Naive thymus-derived CD4-positive, alpha-beta T cell (primary cell): ENCODE measurements at regions of chr17 and their contacts with region 1.

Region 1: GRCh38 chr17:28951991-28952975 is 965 bp upstream of the PHF12 start:
- DNase-seq: peak; percentile 79 to 99 (median 96)
- ATAC-seq: peak; percentile 82
- H3K4me3 ChIP-seq: peak overlapping the region; percentile 84
- H3K4me3 Mint-ChIP-seq: no peak overlapping the region
- H3K27ac ChIP-seq: peak overlapping the region; percentile 81
- H3K27ac Mint-ChIP-seq: no peak overlapping the region
- H3K4me1 ChIP-seq: peaks cover 19 to 26% of the 10 kb centered on the region in 2 donors
- H3K4me1 Mint-ChIP-seq: peaks cover 12 to 24% (median 14%) of the 10 kb centered on the region in 7 donors
- H3K27me3 ChIP-seq: no peaks in the 10 kb centered on the region
- H3K27me3 Mint-ChIP-seq: peaks cover 0 to 4% (median 0%) of the 10 kb centered on the region in 5 donors

Region 2: DNA sequence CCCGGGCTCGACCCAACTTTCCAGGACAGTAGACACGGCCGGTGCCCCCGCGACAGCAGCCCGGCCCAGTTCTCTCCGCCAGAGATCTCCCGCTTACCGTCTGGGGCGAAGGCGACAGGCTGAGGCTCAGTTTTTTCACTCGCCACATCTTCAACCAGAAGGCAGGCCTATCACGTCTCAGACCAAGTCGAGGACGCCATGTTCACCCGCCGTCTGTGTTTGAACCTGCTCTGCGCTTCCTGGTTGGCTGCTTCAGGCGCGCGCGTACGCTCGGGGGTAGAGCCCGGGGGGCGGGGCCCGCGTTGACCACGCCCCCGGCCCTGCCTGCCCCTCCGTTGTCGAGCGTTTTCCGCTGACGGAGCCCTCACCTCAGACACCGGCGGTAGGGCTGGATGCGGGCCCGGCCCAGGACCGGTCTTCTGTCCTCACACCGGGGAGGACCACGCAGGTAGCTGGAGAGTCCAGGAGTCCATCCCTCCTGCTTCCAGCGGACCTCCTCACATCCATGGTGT is 353.4 kb before region 1 on chr17 and contains the start of gene SPAG5:
- CTCF ChIA-PET with region 1: no interaction called
- POLR2A ChIA-PET with region 1: interaction called, 3 read pairs
- intact Hi-C with region 1: loop called in 1 of 2 experiments (anchors 2 kb)
- DNase-seq: peak; percentile 93 to 97 (median 96)
- ATAC-seq: peak; percentile 98
- H3K4me3 ChIP-seq: peak within 1 kb of the TSS; percentile 93
- H3K4me3 Mint-ChIP-seq: peak within 1 kb of the TSS; percentile 88 to 99 (median 94)
- H3K27ac ChIP-seq: peak within 1 kb of the TSS; percentile 97
- H3K27ac Mint-ChIP-seq: peak within 1 kb of the TSS; percentile 96 to 99 (median 98)
- H3K4me1 ChIP-seq: peaks cover 8 to 10% of the 10 kb centered on the region in 2 donors
- H3K4me1 Mint-ChIP-seq: peaks cover 18 to 25% (median 21%) of the 10 kb centered on the region in 7 donors
- H3K27me3 ChIP-seq: no peaks in the 10 kb centered on the region
- H3K27me3 Mint-ChIP-seq: no peaks in the 10 kb centered on the region
- total RNA-seq, gene SPAG5: 10.4 to 95.3 (median 18.4) TPM

Region 3: GRCh38 chr17:28726226-28727130 is 225.8 kb before region 1 on chr17 and contains the start of gene TLCD1:
- CTCF ChIA-PET with region 1: interaction called, 21 read pairs
- POLR2A ChIA-PET with region 1: interaction called, 96 read pairs
- intact Hi-C with region 1: loop called (anchors 1 kb)
- DNase-seq: peak; percentile 79 to 93 (median 87)
- ATAC-seq: peak; percentile 65
- H3K4me3 ChIP-seq: peak within 1 kb of the TSS; percentile 83
- H3K4me3 Mint-ChIP-seq: peak within 1 kb of the TSS; percentile 82 to 98 (median 96)
- H3K27ac ChIP-seq: peak within 1 kb of the TSS; percentile 100
- H3K27ac Mint-ChIP-seq: peak within 1 kb of the TSS; percentile 93 to 100 (median 98)
- H3K4me1 ChIP-seq: peaks cover 27 to 37% of the 10 kb centered on the region in 2 donors
- H3K4me1 Mint-ChIP-seq: peaks cover 12 to 63% (median 52%) of the 10 kb centered on the region in 7 donors
- H3K27me3 ChIP-seq: no peaks in the 10 kb centered on the region
- H3K27me3 Mint-ChIP-seq: no peaks in the 10 kb centered on the region
- total RNA-seq, gene TLCD1: 0.69 to 3.0 (median 0.79) TPM in 3 of 5 experiments, not detected in the others

Region 4: DNA sequence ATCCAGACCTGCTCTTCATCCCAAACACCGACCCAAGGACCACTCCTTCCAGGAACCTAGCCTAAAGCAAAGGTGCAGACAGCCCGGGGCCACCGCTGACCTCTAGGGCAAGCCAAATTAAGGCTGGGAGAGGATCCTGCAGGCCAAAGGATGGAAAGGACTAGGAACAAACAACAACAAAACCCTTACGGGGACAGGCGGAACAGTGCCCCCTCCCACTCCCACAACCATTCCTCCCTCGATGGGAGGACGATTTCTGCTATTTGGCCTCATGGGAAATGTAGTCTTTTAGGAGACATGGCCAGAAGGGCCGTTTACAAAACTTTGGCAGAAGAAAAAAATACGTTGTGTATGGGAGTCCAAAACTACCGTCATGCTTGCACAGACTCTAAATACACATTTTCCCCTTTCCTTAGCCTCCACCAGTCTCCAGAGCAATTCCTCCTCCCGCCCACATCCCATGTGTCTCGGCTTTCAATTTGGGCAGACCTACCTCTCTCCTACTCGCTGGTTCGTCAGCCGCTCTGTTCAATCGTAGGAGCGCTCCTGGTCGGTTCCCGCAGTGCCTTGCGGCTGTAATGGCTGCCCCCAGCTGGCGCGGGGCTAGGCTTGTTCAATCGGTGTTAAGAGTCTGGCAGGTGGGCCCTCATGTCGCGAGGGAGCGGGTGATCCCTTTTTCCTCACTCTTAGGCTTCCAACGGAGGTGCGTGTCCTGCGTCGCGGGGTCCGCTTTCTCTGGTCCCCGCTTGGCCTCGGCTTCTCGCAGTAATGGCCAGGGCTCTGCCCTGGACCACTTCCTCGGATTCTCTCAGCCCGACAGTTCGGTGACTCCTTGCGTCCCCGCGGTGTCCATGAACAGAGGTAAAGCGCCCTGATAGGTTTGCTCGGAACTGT is 97.6 kb before region 1 on chr17 and contains the start of gene ERAL1:
- CTCF ChIA-PET with region 1: no interaction called
- POLR2A ChIA-PET with region 1: interaction called, 4 read pairs
- intact Hi-C with region 1: loop called (anchors 1 kb)
- DNase-seq: peak; percentile 63 to 87 (median 83)
- ATAC-seq: peak; percentile 100
- H3K4me3 ChIP-seq: peak within 1 kb of the TSS; percentile 86
- H3K4me3 Mint-ChIP-seq: peak within 1 kb of the TSS; percentile 90 to 100 (median 94)
- H3K27ac ChIP-seq: peak within 1 kb of the TSS; percentile 82
- H3K27ac Mint-ChIP-seq: peak within 1 kb of the TSS; percentile 85 to 94 (median 90)
- H3K4me1 ChIP-seq: peaks cover 7 to 12% of the 10 kb centered on the region in 2 donors
- H3K4me1 Mint-ChIP-seq: peaks cover 0 to 27% (median 11%) of the 10 kb centered on the region in 7 donors
- H3K27me3 ChIP-seq: no peaks in the 10 kb centered on the region
- H3K27me3 Mint-ChIP-seq: no peaks in the 10 kb centered on the region
- total RNA-seq, gene ERAL1: 19.8 to 50.0 (median 24.9) TPM

Region 5: DNA sequence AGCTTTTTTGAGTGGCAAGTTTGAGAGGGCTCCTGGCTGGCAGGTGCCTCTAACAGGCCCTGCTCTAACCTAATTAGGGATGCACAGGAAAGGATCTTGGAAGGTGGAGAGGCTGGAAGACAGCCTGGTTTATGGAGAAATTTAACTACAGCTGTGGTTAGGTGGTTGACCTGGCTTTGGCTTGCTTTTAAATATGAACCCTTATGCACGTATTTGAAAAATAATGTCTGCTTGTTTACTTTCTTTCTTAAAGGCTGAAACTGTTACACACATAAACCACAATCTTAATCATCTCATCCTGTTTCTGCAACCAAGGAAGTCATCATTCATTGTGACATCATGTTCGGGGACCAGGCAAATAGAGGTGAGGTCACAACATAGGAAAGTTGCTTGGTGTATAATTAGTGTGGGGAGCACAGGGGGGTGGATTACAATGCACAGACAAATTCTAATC is 26.3 kb before region 1 on chr17:
- CTCF ChIA-PET with region 1: interaction called, 8 read pairs
- POLR2A ChIA-PET with region 1: interaction called, 93 read pairs
- intact Hi-C with region 1: loop called (anchors 1 kb)
- DNase-seq: peak in 7 of 9 donors; percentile 66 to 89 (median 82)
- ATAC-seq: peak; percentile 96
- H3K4me3 ChIP-seq: peak overlapping the region; percentile 31
- H3K4me3 Mint-ChIP-seq: peak overlapping the region; percentile 34 to 82 (median 60)
- H3K27ac ChIP-seq: peak overlapping the region; percentile 88
- H3K27ac Mint-ChIP-seq: peak overlapping the region; percentile 93 to 99 (median 96)
- H3K4me1 ChIP-seq: peaks cover 26 to 38% of the 10 kb centered on the region in 2 donors
- H3K4me1 Mint-ChIP-seq: peaks cover 35 to 65% (median 54%) of the 10 kb centered on the region in 7 donors
- H3K27me3 ChIP-seq: no peaks in the 10 kb centered on the region
- H3K27me3 Mint-ChIP-seq: no peaks in the 10 kb centered on the region

Region 6: GRCh38 chr17:28986714-28987655 is 34.7 kb after region 1 on chr17:
- CTCF ChIA-PET with region 1: no interaction called
- POLR2A ChIA-PET with region 1: no interaction called
- intact Hi-C with region 1: no loop called
- DNase-seq: no peak
- ATAC-seq: no peak
- H3K4me3 ChIP-seq: no peak overlapping the region
- H3K4me3 Mint-ChIP-seq: no peak overlapping the region
- H3K27ac ChIP-seq: no peak overlapping the region
- H3K27ac Mint-ChIP-seq: no peak overlapping the region
- H3K4me1 ChIP-seq: peaks cover 10 to 22% of the 10 kb centered on the region in 2 donors
- H3K4me1 Mint-ChIP-seq: peaks cover 16 to 25% (median 18%) of the 10 kb centered on the region in 7 donors
- H3K27me3 ChIP-seq: no peaks in the 10 kb centered on the region
- H3K27me3 Mint-ChIP-seq: peaks cover 0 to 4% (median 0%) of the 10 kb centered on the region in 5 donors

Region 7: DNA sequence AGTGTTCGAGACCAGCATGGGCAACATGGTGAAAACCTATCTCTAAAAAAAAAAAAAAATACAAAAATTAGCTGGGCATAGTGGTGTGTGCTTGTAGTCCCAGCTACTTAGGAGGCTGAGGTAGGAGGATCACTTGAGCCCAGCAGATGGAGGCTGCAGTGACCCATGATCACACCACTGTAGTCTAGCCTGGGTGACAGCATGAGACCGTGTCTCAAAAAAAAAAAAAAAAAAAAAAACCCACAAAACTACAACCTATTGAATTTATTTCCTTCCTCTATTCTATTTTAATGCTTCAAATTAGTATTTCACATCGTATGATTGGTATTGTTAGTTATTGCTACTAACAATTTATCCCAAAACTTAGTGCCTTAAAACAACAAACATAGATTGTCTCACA is 351.1 kb after region 1 on chr17:
- CTCF ChIA-PET with region 1: no interaction called
- POLR2A ChIA-PET with region 1: no interaction called
- intact Hi-C with region 1: no loop called
- DNase-seq: no peak
- ATAC-seq: no peak
- H3K4me3 ChIP-seq: no peak overlapping the region
- H3K4me3 Mint-ChIP-seq: no peak overlapping the region
- H3K27ac ChIP-seq: no peak overlapping the region
- H3K27ac Mint-ChIP-seq: no peak overlapping the region
- H3K4me1 ChIP-seq: no peaks in the 10 kb centered on the region
- H3K4me1 Mint-ChIP-seq: peaks cover 0 to 8% (median 4%) of the 10 kb centered on the region in 7 donors
- H3K27me3 ChIP-seq: no peaks in the 10 kb centered on the region
- H3K27me3 Mint-ChIP-seq: peaks cover 0 to 6% (median 0%) of the 10 kb centered on the region in 5 donors

Region 8: DNA sequence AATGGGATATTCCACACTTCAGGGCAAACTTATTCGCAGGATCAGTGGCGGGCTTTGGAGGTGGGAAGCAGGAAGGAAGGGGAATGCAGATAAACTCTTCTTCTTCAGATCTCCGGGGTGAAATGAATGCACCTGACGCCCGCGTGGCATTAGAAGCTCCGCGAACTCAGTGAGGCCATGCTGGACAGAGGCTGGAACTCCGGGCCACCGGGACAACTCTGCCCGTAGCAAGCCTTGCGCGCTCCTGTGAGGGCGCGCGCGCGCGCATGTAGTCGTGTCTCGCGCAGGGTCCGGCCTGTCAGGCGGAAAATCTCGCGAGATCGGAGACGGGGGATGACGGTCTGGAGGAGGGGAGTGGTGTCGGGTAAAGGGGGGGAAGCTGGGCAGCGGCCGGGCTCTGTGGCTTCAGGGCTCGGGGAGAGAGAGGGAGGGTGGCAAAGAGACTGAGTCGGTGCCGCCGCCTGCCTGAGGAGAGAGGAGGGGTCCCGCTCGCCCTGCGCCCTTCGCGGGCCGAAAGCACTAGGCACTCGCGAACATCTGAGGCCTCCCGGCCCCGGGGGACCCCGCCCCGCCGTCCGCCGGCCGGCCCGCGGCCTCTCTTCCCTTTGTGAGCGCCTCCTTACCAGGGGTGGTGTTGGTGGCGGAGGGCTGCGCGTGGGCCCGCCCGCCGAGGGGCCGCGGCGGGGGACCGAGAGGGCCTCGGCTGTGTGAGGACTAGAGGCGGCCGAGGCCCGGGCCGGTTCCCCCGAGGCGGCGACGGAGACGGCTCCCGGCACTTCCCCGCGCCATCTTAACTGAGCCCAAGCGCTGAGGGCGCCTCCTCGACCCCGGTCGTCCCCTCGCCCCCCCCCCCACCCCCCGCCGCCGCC is 437.9 kb after region 1 on chr17 and contains the start of gene TAOK1:
- CTCF ChIA-PET with region 1: no interaction called
- POLR2A ChIA-PET with region 1: interaction called, 4 read pairs
- intact Hi-C with region 1: loop called in 1 of 2 experiments (anchors 1 kb)
- DNase-seq: peak; percentile 93 to 98 (median 96)
- ATAC-seq: peak; percentile 97
- H3K4me3 ChIP-seq: peak within 1 kb of the TSS; percentile 94
- H3K4me3 Mint-ChIP-seq: peak within 1 kb of the TSS; percentile 95 to 99 (median 98)
- H3K27ac ChIP-seq: peak within 1 kb of the TSS; percentile 98
- H3K27ac Mint-ChIP-seq: peak within 1 kb of the TSS; percentile 92 to 98 (median 97)
- H3K4me1 ChIP-seq: peaks cover 14 to 25% of the 10 kb centered on the region in 2 donors
- H3K4me1 Mint-ChIP-seq: peaks cover 36 to 49% (median 44%) of the 10 kb centered on the region in 7 donors
- H3K27me3 ChIP-seq: no peaks in the 10 kb centered on the region
- H3K27me3 Mint-ChIP-seq: peaks cover 0 to 2% (median 0%) of the 10 kb centered on the region in 5 donors
- total RNA-seq, gene TAOK1: 62.4 to 70.1 (median 66.5) TPM